ENCODE measurements at regions of chr9 and their contacts with region 1.

Region 1: GRCh38 chr9:120936011-120936763 is 9.6 kb upstream of the TRAF1 start:
- DNase-seq: peak; percentile 84 to 90

Region 2: GRCh38 chr9:120755827-120756434 is 180.3 kb before region 1 on chr9:
- in situ Hi-C with region 1: loop called (anchors 25 kb)
- DNase-seq: peak; percentile 62 to 78

Region 3: DNA sequence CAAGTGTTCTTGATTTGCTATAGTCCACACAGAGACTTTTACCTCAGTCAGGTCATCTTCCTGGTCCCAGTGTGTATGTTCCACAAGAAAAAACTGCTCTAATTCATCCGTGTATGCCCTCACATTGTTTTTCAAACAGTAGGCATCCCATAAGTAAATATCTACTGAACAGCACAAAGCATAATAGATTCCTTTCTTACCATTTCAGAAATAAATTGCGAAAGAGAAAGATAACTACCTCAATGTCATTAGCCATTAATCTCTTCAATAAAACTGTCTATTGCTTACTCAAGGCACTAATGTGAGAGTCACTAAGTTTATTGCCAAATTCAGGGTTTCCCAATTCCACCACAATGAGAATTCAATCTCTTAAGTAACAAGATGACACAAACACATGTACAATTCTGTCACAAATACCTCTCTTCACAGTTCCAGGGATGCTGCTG is 152.6 kb before region 1 on chr9:
- in situ Hi-C with region 1: no loop called
- DNase-seq: no peak

Measured in T47D (cell line).